Heart left ventricle (tissue), 16 donors: ENCODE measurements at regions of chr14 and their contacts with region 1.

Region 1: DNA sequence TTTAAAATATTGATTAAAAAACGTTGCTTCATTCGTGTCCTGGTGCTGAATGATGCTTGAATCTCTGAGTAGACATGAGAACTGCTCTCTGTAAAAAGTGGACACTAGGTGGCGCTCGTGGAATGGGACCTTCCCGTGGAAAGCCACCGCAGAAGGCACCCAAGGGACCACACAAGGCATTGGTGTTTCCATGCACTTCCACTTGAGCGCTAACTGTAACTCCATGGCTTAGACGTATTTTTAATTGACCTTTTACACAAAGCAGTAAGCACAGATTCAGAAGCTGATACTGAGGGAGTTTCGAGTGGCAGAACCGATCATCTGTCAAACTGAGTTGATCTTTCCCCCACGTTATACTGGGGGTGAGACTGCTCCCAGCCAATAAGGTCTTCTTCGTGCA is 135.3 kb downstream of the PRKCH start:
- DNase-seq: peak in 4 of 5 donors; percentile 81 to 90 (median 85)
- ATAC-seq: peak in 3 of 4 donors; percentile 76 to 83 (median 78)
- H3K4me3 ChIP-seq: no peak overlapping the region
- H3K27ac ChIP-seq: no peak overlapping the region
- H3K4me1 ChIP-seq: peaks cover 0 to 38% (median 13%) of the 10 kb centered on the region in 12 donors
- H3K27me3 ChIP-seq: no peaks in the 10 kb centered on the region
- CTCF ChIP-seq: peak; percentile 78 to 94 (median 88)
- POLR2A ChIP-seq: no peak

Region 2: GRCh38 chr14:61326847-61327246 is 129.9 kb before region 1 on chr14:
- intact Hi-C with region 1: loop called in 7 of 10 experiments (anchors 5 to 10 kb)
- DNase-seq: peak; percentile 78 to 89 (median 83)
- ATAC-seq: peak; percentile 62 to 91 (median 84)
- H3K4me3 ChIP-seq: peak overlapping the region in 8 of 12 donors; percentile 3 to 36 (median 12)
- H3K27ac ChIP-seq: peak overlapping the region; percentile 48 to 88 (median 78)
- H3K4me1 ChIP-seq: peaks cover 0 to 44% (median 26%) of the 10 kb centered on the region in 12 donors
- H3K27me3 ChIP-seq: peaks cover 0 to 10% (median 0%) of the 10 kb centered on the region in 9 donors
- CTCF ChIP-seq: no peak
- POLR2A ChIP-seq: peak in 1 of 2 donors; percentile 41

Region 3: GRCh38 chr14:61438860-61439684 is 17.6 kb before region 1 on chr14:
- intact Hi-C with region 1: no loop called
- DNase-seq: peak in 2 of 5 donors; percentile 30 to 40
- ATAC-seq: peak; percentile 76 to 82 (median 78)
- H3K4me3 ChIP-seq: peak overlapping the region in 5 of 12 donors; percentile 4 to 36 (median 7)
- H3K27ac ChIP-seq: peak overlapping the region in 8 of 12 donors; percentile 3 to 82 (median 25)
- H3K4me1 ChIP-seq: peaks cover 6 to 68% (median 30%) of the 10 kb centered on the region in 12 donors
- H3K27me3 ChIP-seq: no peaks in the 10 kb centered on the region
- CTCF ChIP-seq: no peak
- POLR2A ChIP-seq: no peak

Region 4: GRCh38 chr14:61547186-61548086 is 90.7 kb after region 1 on chr14:
- intact Hi-C with region 1: no loop called
- DNase-seq: peak in 1 of 5 donors; percentile 40
- ATAC-seq: peak in 1 of 4 donors; percentile 32
- H3K4me3 ChIP-seq: no peak overlapping the region
- H3K27ac ChIP-seq: peak overlapping the region in 4 of 12 donors; percentile 1 to 48 (median 43)
- H3K4me1 ChIP-seq: peaks cover 6 to 84% (median 47%) of the 10 kb centered on the region in 12 donors
- H3K27me3 ChIP-seq: no peaks in the 10 kb centered on the region
- CTCF ChIP-seq: no peak
- POLR2A ChIP-seq: no peak